ENCODE measurements at regions of chr6 and their contacts with region 1.

Region 1: GRCh38 chr6:164109770-164110140 is 695.2 kb downstream of the QKI start:
- DNase-seq: peak in 1 of 2 donors; percentile 63
- ATAC-seq: no peak
- H3K4me3 ChIP-seq: no peak overlapping the region
- H3K27ac ChIP-seq: no peak overlapping the region
- H3K4me1 ChIP-seq: no peaks in the 10 kb centered on the region
- H3K27me3 ChIP-seq: no peaks in the 10 kb centered on the region

Region 2: DNA sequence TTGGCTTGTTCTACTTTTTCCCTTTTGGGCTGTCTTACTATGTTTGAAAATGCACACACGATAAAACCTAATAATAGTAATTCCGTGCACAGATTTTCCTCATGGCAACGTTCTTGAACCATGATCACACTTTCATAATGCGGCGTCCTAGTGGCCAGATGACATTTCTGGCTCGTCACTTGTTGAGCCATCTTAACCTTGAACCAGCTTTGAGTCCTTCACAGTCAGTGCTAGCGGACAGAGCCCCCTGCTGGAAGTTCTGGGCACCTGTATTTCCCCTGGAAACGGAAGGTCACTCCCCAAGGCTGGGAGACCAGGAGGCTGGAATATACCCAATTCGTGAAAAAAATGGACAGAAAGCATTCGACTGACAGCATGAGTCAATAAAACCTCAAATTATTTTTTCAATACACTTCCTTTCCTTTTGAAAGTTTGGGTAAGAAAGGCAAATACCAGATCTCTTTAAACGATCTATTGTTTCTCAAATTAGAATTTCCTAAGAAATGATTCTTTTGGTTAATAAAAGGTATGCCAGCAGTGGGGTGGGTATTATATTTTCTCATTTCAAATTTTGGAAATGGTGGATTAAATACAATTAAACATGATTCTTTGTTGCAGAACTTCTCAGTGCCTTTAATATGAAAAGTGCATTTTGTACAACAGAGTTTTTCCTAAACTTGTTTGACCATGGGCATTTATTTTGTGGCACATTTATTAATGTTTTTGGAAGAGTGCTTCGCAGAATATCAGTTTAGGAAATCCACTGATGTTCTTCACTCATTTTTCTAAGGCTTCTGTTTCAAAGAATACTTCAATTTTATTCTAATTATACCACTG is 153.0 kb before region 1 on chr6:
- intact Hi-C with region 1: no loop called
- DNase-seq: peak; percentile 82 to 89
- ATAC-seq: peak; percentile 85
- H3K4me3 ChIP-seq: no peak overlapping the region
- H3K27ac ChIP-seq: no peak overlapping the region
- H3K4me1 ChIP-seq: no peaks in the 10 kb centered on the region
- H3K27me3 ChIP-seq: no peaks in the 10 kb centered on the region

Region 3: DNA sequence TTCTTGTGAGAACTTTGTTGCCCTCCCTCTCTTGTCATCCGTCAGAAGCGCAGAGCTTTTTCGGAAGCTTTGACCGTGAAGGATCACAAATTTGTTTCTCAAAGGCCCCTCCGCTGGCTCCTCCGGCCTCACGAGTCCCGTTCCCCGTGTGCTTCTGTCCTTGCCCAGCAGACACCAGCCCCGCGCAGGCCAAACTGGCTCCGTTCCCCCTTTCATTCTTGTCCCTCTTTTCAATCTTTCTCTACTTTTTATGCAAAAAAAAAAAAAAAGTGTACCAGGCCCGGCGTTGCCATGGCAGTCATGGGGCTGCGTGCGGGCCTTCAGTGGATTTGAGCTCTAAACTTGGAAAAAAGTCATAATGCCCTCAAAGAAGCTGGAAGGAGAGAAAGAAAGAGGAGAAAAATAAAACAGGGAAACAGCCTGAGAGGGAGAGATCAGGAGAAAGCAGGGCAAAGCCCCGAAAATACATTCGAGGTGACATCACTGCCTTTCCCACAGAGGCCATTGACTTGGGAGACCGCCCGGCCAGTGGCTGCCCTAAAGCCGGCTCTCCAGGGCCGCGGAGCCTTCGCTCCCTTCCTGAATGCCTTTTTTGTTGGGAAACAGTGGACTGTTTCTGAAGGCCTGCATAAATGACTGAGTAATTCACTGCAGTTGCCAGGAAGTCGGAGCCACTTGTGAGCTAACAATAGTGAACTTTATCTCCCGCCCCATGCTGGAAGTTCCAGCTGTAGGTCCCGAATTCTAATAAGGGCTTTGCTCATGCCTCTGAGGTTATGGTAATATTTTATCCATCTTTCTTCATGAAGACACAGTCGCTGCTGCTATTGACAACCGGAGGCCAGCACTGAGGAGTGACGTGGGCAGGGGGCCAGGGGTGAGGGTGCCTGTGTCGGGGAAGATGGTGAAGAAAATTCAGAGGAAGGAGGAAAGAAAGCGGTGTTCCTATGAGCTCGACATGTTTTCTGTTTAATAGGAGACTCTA is 24.4 kb before region 1 on chr6:
- intact Hi-C with region 1: loop called in 1 of 2 experiments (anchors 1 kb)
- DNase-seq: peak; percentile 92
- ATAC-seq: peak; percentile 94
- H3K4me3 ChIP-seq: no peak overlapping the region
- H3K27ac ChIP-seq: peak overlapping the region; percentile 95 to 98
- H3K4me1 ChIP-seq: no peaks in the 10 kb centered on the region
- H3K27me3 ChIP-seq: no peaks in the 10 kb centered on the region

Measured in aorta (tissue), 5 donors.